Activated CD8-positive, alpha-beta T cell treated with anti-CD3 and anti-CD28 coated beads, Interleukin-2, amount 10 ng/mL, durations not matched to agents 7 days and 5 days (primary cell): ENCODE measurements at regions of chr12 and their contacts with region 1.

Region 1: DNA sequence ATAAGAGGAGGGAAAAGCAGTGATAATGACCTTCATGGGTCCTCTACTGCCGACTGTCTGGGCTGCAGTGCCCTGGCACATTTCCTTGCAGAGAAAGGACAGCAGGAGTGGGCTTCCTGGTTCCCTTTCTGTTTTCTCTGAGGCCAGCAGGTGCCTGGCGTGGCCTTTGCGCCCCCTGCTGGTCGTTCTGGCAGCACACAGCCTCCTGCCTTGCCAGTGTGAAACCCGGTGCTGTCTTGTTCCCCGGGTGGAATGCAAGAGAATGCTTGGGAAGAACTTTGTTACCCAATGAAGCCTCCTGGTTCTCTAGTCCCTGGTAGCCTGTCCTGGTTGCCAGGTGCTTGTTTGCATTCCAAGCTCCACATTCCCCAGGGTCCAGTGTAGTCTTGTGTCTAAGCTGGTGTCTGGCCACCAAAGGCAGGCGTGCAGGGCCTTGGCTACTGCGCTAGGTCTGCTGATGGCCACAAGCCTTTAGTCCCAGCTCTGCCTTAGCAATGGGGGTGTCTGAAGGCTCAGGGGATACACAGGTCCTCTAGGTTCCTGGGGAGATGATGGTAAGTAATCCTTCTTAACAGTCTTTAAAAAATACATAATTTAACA is 1392.4 kb upstream of the TMEM132C start:
- DNase-seq: peak; percentile 59
- ATAC-seq: peak; percentile 57
- H3K4me3 Mint-ChIP-seq: no peak overlapping the region
- H3K27ac Mint-ChIP-seq: no peak overlapping the region
- H3K4me1 Mint-ChIP-seq: no peaks in the 10 kb centered on the region
- H3K27me3 Mint-ChIP-seq: no peaks in the 10 kb centered on the region

Region 2: GRCh38 chr12:126069549-126070165 is 804.9 kb before region 1 on chr12:
- CTCF ChIA-PET with region 1: interaction called, 17 read pairs
- POLR2A ChIA-PET with region 1: no interaction called
- DNase-seq: peak; percentile 63
- ATAC-seq: no peak
- H3K4me3 Mint-ChIP-seq: no peak overlapping the region
- H3K27ac Mint-ChIP-seq: no peak overlapping the region
- H3K4me1 Mint-ChIP-seq: no peaks in the 10 kb centered on the region
- H3K27me3 Mint-ChIP-seq: no peaks in the 10 kb centered on the region

Region 3: DNA sequence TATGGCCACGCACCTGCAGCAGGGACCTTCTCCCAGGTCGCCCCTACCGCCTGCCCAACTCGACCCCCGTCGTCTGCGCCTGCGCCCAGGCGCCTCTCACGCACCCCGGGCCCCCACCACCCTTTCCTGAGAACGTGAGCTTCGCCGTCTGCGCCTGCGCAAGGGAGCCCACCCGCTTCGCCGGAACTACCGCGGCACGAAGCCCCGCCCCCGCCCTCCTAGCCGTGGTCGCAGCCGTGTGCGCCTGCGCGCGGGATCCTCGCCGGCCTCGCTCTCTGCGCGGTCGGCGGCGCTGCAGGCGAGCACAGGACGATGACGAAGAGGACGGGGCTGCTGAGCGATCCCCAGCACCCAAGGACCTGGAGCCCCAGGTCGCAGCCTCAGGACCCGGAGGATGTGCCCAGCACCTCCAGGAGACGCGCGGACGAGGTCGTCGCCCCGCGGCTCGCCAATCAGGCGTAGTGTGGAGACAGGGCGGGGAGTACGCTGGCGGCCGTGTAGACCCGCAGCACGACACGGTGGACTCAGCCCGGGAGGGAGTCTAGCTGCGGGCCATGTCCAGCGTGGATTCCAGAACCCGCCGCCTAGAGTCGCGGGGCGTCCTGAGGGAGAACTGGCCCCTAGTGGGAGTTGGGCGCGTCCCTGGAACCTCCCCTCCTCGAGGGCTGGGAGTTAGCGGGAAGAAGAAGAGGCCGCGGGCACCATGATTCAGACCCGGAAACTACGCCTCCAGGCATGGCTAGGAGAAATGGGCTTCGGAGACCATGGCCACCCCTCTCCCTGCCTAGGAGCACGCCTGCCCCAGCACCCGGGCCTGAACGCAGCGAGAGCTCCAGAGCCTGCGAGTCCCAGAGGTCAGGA is 271.6 kb after region 1 on chr12:
- CTCF ChIA-PET with region 1: no interaction called
- POLR2A ChIA-PET with region 1: no interaction called
- DNase-seq: peak; percentile 66
- ATAC-seq: peak; percentile 92
- H3K4me3 Mint-ChIP-seq: peak overlapping the region; percentile 70
- H3K27ac Mint-ChIP-seq: peak overlapping the region; percentile 25
- H3K4me1 Mint-ChIP-seq: peaks cover 5% of the 10 kb centered on the region
- H3K27me3 Mint-ChIP-seq: no peaks in the 10 kb centered on the region